ENCODE measurements at regions of chr20 and their contacts with region 1.

Region 1: GRCh38 chr20:59850018-59850641 is 83.3 kb downstream of the SYCP2 start:
- DNase-seq: no peak
- H3K4me3 ChIP-seq: no peak overlapping the region
- H3K27ac ChIP-seq: no peak overlapping the region
- H3K4me1 ChIP-seq: no peaks in the 10 kb centered on the region
- H3K27me3 ChIP-seq: no peaks in the 10 kb centered on the region
- CTCF ChIP-seq: peak; percentile 69
- EP300 ChIP-seq: no peak
- RAD21 ChIP-seq: peak; percentile 78

Region 2: GRCh38 chr20:59771506-59772372 is 78.4 kb before region 1 on chr20:
- CTCF ChIA-PET with region 1: interaction called, 19 read pairs
- POLR2A ChIA-PET with region 1: no interaction called
- DNase-seq: no peak
- H3K4me3 ChIP-seq: no peak overlapping the region
- H3K27ac ChIP-seq: no peak overlapping the region
- H3K4me1 ChIP-seq: no peaks in the 10 kb centered on the region
- H3K27me3 ChIP-seq: no peaks in the 10 kb centered on the region
- CTCF ChIP-seq: no peak
- EP300 ChIP-seq: no peak
- RAD21 ChIP-seq: no peak

Region 3: DNA sequence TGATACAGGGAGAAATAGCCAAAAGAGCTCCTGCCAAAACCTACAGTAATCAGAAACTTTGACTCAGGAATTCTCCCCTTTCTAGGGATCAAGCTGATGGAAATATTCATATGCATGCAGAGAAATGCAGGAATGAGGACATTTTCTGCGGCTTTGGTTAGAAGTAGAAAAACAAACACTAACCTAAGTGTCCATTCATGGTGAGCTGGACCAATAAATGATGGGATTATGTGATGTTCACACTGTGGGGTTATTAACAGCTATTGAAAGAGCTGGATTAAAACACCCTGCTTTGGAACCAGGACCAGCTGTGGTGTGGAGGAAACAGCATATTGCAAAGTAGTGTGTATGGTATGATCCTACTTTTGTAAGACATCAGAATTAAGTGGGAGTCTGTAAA is 59.8 kb before region 1 on chr20:
- CTCF ChIA-PET with region 1: interaction called, 170 read pairs
- POLR2A ChIA-PET with region 1: no interaction called
- DNase-seq: no peak
- H3K4me3 ChIP-seq: no peak overlapping the region
- H3K27ac ChIP-seq: no peak overlapping the region
- H3K4me1 ChIP-seq: no peaks in the 10 kb centered on the region
- H3K27me3 ChIP-seq: no peaks in the 10 kb centered on the region
- CTCF ChIP-seq: no peak
- EP300 ChIP-seq: no peak
- RAD21 ChIP-seq: no peak

Region 4: DNA sequence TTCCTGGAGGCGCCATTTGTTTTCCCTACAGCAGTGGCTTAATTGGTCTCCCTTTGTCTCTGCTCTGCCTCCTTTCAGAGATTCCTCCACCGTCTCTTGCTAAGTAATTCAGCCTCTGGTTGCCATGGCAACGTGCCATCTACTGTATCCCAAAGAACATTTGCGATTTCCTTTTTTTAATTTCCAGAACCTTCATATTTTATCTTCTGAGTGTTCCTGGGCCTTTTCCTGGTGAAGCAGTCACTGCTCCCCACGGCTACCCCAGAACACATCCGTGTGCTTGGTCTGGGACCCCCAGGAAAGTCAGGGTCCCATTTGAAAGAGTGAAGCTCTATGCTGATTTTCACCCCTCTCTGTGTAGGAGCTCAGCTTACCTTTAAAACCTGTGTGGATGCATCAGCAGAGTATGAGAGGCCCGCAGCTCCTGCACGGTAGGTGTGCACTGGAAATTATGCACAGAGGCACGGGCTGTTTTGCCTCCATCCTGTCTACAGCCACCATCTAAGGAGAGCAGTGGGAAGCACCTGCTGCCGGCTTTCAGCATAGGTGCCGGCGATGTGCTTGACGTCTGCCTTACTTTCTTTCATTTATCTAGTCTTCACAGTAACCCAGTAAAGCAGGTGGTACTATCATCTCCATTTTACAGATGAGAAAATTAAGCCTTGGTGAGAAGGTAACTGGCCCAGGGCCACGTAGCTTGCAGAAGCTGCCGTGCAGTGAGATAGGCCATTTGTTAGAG is 39.5 kb before region 1 on chr20:
- CTCF ChIA-PET with region 1: interaction called, 10 read pairs
- POLR2A ChIA-PET with region 1: no interaction called
- DNase-seq: peak; percentile 54
- H3K4me3 ChIP-seq: no peak overlapping the region
- H3K27ac ChIP-seq: no peak overlapping the region; a peak in 1 of 4 replicates
- H3K4me1 ChIP-seq: peaks cover 0 to 2% of the 10 kb centered on the region in 2 experiments; a peak in 1 of 4 replicates
- H3K27me3 ChIP-seq: no peaks in the 10 kb centered on the region
- CTCF ChIP-seq: no peak
- EP300 ChIP-seq: no peak
- RAD21 ChIP-seq: no peak

Region 5: DNA sequence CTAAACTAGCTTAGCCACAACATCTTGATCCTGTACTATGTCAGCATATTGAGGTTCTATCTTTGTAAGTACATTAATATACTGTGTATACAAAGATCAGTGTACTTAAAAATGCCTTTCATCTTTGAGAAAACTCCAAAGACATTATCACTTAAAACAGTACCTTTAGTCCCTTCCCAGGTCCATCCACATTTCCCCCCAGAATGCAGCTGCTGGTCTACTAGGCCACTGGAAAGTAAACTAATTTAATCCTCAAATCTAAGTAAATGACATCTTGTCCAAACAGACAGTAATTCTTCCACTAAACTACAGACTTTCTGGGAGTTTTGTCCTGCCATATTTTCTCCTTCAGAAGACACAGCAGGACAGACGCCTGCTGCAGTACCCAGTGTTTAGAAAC is 14.6 kb after region 1 on chr20:
- CTCF ChIA-PET with region 1: interaction called, 42 read pairs
- POLR2A ChIA-PET with region 1: no interaction called
- DNase-seq: no peak
- H3K4me3 ChIP-seq: no peak overlapping the region
- H3K27ac ChIP-seq: no peak overlapping the region
- H3K4me1 ChIP-seq: no peaks in the 10 kb centered on the region
- H3K27me3 ChIP-seq: no peaks in the 10 kb centered on the region
- CTCF ChIP-seq: no peak
- EP300 ChIP-seq: no peak
- RAD21 ChIP-seq: no peak